BJ (cell line): ENCODE measurements at regions of chr5 and their contacts with region 1.

Region 1: GRCh38 chr5:132813599-132814502 is 749 bp downstream of the SOWAHA start:
- DNase-seq: no peak
- H3K4me3 ChIP-seq: peak overlapping the region; percentile 16; the same call in 1 of the 2 replicates
- H3K27me3 ChIP-seq: peaks cover 18% of the 10 kb centered on the region
- CTCF ChIP-seq: no peak

Region 2: DNA sequence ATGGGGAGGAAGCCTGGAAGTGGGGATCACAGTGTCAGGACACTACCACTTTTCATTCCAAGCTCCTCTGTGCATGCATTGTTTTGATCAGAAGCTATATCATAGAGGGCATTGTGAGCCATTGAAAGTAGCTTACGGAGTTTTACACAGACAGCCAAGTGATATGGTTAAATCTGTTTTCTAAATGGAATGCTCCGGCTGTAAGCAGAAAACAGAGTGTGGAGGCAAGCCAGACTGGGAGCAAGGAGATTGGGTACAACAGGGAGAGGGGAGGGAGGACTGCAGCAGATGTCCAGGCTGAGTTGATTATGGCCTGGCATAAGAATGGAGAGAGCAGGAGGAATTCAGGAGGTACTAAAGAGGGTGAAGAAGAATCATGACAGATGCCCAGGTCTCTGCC is 16.2 kb before region 1 on chr5:
- CTCF ChIA-PET with region 1: interaction called, 16 read pairs
- POLR2A ChIA-PET with region 1: interaction called, 20 read pairs
- DNase-seq: no peak
- H3K4me3 ChIP-seq: no peak overlapping the region
- H3K27me3 ChIP-seq: no peaks in the 10 kb centered on the region; the same call in none of the 2 replicates
- CTCF ChIP-seq: no peak